ENCODE measurements at regions of chr6 and their contacts with region 1.

Region 1: DNA sequence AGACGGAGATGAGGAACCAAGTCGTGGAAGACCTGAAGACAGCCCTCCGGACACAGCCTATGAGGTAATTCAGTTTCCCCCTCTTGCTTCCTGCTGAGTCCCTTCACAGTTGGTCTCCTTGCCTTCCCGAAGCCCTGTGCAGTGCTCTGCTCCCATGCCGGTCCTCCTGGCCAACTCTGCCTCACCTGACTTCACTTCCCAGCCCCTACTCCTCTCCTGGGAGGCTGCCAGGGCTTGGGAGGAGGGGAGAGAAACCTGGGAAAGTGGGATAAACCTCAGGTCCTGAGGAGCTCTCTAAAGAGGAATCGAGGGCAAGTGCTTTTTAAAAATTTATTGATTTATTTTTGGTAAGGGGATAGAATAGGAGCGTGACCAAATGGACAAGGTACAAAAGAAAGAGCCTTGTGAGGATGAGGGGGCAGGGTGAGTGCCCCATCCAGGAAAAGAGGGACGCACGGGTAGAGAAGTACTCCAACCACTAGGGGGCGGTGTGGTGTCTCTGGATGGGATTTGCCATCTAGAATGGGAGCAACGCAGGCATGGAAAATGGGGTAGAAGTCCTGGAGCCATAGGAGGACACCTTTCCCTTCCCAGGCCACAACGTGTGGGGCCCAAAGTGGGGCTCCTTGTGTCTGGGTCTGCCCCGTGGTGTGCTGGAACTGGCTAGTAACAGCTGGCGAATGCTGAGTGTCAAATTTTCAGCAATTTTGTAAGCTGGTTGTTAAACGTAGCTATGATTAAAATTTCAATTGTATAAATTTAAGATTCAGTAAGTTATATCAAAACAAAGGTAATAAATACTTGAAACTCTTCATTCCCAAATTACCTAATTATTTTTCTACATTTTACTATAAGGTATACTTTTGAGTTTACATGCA is 69.0 kb downstream of the MOCS1 start:
- DNase-seq: peak in 29 of 35 experiments; percentile 6 to 58 (median 28)
- ATAC-seq: no peak
- H3K4me3 ChIP-seq: no peak overlapping the region
- H3K4me3 Mint-ChIP-seq: no peak overlapping the region
- H3K27ac ChIP-seq: no peak overlapping the region
- H3K27ac Mint-ChIP-seq: no peak overlapping the region
- H3K4me1 ChIP-seq: no peaks in the 10 kb centered on the region
- H3K4me1 Mint-ChIP-seq: no peaks in the 10 kb centered on the region
- H3K27me3 ChIP-seq: peaks cover 0 to 14% of the 10 kb centered on the region in 2 experiments
- H3K27me3 Mint-ChIP-seq: peaks cover 13 to 14% of the 10 kb centered on the region in 2 donors

Region 2: DNA sequence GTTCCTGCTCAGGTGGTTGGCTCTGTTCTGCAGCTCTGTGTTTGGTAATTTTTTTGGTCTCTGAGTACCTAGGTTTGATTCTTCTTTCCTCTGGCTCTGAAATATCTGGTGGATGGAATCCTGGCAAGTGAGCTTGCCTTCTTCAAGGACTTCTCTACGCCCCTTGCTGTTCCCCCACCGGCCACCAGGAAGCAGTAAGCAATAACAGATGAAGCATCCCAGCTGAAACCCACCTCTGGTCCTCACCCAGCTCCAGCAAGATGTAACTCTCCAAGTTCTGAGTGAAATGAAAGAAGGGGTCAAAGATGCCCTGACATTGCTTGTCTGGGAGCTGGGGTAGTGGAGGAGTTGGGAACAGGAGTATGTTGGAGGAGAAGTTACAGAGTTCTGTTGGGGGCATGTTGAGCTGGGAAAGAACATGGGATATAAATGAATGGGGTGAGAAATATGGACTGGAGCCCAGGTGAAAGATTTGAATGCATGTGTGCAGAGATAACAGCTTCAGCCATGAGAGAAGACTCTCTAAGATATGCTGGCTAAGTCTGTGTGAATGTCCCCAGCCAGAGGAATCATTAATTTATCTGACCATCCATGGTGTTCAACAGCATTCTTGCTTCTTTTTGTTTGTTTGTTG is 868.0 kb before region 1 on chr6:
- CTCF ChIA-PET with region 1: no interaction called
- POLR2A ChIA-PET with region 1: interaction called in 1 of 2 experiments, 10 read pairs
- DNase-seq: peak in 22 of 35 experiments; percentile 2 to 44 (median 12)
- ATAC-seq: no peak
- H3K4me3 ChIP-seq: no peak overlapping the region
- H3K4me3 Mint-ChIP-seq: no peak overlapping the region
- H3K27ac ChIP-seq: no peak overlapping the region
- H3K27ac Mint-ChIP-seq: no peak overlapping the region
- H3K4me1 ChIP-seq: no peaks in the 10 kb centered on the region
- H3K4me1 Mint-ChIP-seq: no peaks in the 10 kb centered on the region
- H3K27me3 ChIP-seq: peaks cover 10 to 13% of the 10 kb centered on the region in 2 experiments
- H3K27me3 Mint-ChIP-seq: peaks cover 43 to 49% of the 10 kb centered on the region in 2 donors

Region 3: DNA sequence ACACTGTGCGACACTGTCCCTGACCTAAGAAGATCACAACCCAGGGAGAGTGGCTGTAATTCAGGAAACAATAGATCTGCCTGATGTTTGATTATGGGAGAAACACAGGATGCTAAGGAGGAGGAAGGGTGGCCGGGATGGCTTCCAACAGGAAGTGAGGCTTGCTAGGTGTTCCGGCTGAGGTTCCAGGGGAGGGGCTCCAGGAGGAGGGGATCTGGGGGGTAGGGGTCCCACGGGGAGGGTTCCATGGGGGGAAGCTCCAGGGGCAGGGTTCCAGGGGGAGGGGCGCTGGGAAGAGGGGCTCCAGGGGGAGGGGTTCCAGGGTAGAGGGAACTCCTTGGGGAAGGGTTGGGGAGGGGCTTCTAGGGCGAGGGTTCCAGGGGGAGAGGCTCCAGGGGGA is 24.5 kb before region 1 on chr6:
- CTCF ChIA-PET with region 1: no interaction called
- POLR2A ChIA-PET with region 1: no interaction called
- DNase-seq: no peak
- ATAC-seq: no peak
- H3K4me3 ChIP-seq: no peak overlapping the region
- H3K4me3 Mint-ChIP-seq: no peak overlapping the region
- H3K27ac ChIP-seq: no peak overlapping the region
- H3K27ac Mint-ChIP-seq: no peak overlapping the region
- H3K4me1 ChIP-seq: no peaks in the 10 kb centered on the region
- H3K4me1 Mint-ChIP-seq: no peaks in the 10 kb centered on the region
- H3K27me3 ChIP-seq: peaks cover 0 to 7% of the 10 kb centered on the region in 2 experiments
- H3K27me3 Mint-ChIP-seq: peaks cover 18 to 26% of the 10 kb centered on the region in 2 donors

Measured in T-cell (primary cell).